Activated CD8-positive, alpha-beta memory T cell treated with anti-CD3 and anti-CD28 coated beads, Interleukin-2, amount 10 ng/mL, durations not matched to agents 7 days and 5 days (primary cell): ENCODE measurements at regions of chr16 and their contacts with region 1.

Region 1: GRCh38 chr16:30927789-30928378 is 4.5 kb downstream of the FBXL19 start:
- DNase-seq: peak; percentile 55
- ATAC-seq: no peak
- H3K4me3 Mint-ChIP-seq: no peak overlapping the region
- H3K27ac Mint-ChIP-seq: no peak overlapping the region
- H3K4me1 Mint-ChIP-seq: peaks cover 19% of the 10 kb centered on the region
- H3K27me3 Mint-ChIP-seq: no peaks in the 10 kb centered on the region

Region 2: DNA sequence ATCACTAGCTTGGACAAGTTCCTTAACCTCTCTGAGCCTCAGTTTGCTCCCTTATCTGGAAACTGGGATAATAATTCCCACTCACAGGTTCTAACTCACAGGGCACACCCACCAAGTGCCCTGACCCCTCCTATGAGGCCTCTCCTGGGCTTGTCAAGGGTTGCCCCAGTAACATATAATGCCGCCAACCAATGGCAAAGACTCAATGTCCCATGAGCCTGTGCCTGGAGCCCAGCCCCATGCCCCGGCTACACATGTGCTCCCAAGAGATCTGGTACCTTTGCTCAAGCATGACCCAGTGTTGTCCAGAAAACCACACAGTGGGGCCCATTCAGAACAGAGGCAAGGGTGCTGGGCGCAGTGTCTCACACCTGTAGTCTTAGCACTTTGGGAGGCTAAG is 13.1 kb before region 1 on chr16:
- CTCF ChIA-PET with region 1: no interaction called
- DNase-seq: no peak
- ATAC-seq: no peak
- H3K4me3 Mint-ChIP-seq: no peak overlapping the region
- H3K27ac Mint-ChIP-seq: no peak overlapping the region
- H3K4me1 Mint-ChIP-seq: no peaks in the 10 kb centered on the region
- H3K27me3 Mint-ChIP-seq: no peaks in the 10 kb centered on the region

Region 3: GRCh38 chr16:30941600-30942425 is 13.9 kb after region 1 on chr16:
- CTCF ChIA-PET with region 1: interaction called, 38 read pairs
- DNase-seq: peak; percentile 86
- ATAC-seq: peak; percentile 96
- H3K4me3 Mint-ChIP-seq: peak overlapping the region; percentile 69
- H3K27ac Mint-ChIP-seq: peak overlapping the region; percentile 80
- H3K4me1 Mint-ChIP-seq: peaks cover 41% of the 10 kb centered on the region
- H3K27me3 Mint-ChIP-seq: no peaks in the 10 kb centered on the region